Upper lobe of right lung (tissue), 1 donor: ENCODE measurements at regions of chr4 and their contacts with region 1.

Region 1: DNA sequence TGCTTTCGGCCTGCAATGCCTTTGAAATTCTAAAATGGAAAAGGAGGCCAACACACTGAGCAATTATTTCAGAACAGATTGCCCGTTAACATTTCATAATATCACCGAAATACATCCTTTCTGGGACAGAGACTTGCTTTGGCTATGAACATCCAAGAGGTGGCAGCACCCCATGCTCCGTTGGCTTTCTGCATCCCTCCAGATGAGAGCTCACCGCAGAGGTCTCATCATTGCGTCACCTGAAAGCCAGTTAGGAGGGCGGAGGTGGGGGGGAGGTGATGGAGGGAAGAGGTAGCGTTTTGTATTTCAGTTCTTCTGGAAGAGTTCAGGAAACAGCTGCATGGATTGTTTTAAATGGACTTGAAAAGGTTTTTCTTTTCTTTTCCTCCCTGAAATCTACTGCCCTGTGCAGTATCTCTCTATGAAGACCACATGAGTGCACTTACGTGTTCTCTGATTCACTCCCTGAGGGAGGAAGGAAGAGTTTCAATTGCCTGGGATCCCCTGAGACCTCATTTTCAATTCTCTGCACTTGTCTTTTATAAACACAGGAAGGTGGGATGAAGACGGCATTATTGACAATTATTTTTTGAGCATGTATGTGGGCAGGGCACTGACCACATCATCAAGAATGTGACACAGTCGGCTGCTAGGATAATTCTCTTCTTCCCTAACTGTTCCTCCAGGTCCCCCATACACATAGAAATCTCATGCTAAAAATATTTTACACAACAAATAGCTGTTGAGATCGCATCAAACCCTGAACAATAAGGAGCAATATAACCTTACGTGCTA is 166.9 kb upstream of the PGRMC2 start:
- DNase-seq: peak; percentile 79
- ATAC-seq: peak; percentile 94
- H3K4me3 ChIP-seq: no peak overlapping the region
- H3K27ac ChIP-seq: no peak overlapping the region
- H3K4me1 ChIP-seq: peaks cover 10% of the 10 kb centered on the region
- H3K27me3 ChIP-seq: no peaks in the 10 kb centered on the region
- CTCF ChIP-seq: peak; percentile 76

Region 2: GRCh38 chr4:128565565-128566186 is 111.2 kb after region 1 on chr4:
- intact Hi-C with region 1: loop called (anchors 10 kb)
- DNase-seq: peak; percentile 69
- ATAC-seq: peak; percentile 85
- H3K4me3 ChIP-seq: no peak overlapping the region
- H3K27ac ChIP-seq: no peak overlapping the region
- H3K4me1 ChIP-seq: peaks cover 6% of the 10 kb centered on the region
- H3K27me3 ChIP-seq: no peaks in the 10 kb centered on the region
- CTCF ChIP-seq: peak; percentile 54